ENCODE measurements at regions of chr21 and their contacts with region 1.

Region 1: GRCh38 chr21:33491373-33492102 is at the start of gene DNAJC28:
- DNase-seq: peak; percentile 92 to 97 (median 94)
- H3K4me3 ChIP-seq: peak within 1 kb of the TSS; percentile 76 to 88
- H3K4me3 Mint-ChIP-seq: peak within 1 kb of the TSS; percentile 83 to 99 (median 94)
- H3K27ac ChIP-seq: peak within 1 kb of the TSS; percentile 64
- H3K27ac Mint-ChIP-seq: peak within 1 kb of the TSS; percentile 74 to 98 (median 95)
- H3K4me1 ChIP-seq: peaks cover 4% of the 10 kb centered on the region
- H3K4me1 Mint-ChIP-seq: peaks cover 7 to 14% (median 11%) of the 10 kb centered on the region in 4 donors
- H3K27me3 ChIP-seq: no peaks in the 10 kb centered on the region
- H3K27me3 Mint-ChIP-seq: peaks cover 0 to 4% of the 10 kb centered on the region in 2 donors
- total RNA-seq, gene DNAJC28: 1.3 to 1.6 TPM

Region 2: DNA sequence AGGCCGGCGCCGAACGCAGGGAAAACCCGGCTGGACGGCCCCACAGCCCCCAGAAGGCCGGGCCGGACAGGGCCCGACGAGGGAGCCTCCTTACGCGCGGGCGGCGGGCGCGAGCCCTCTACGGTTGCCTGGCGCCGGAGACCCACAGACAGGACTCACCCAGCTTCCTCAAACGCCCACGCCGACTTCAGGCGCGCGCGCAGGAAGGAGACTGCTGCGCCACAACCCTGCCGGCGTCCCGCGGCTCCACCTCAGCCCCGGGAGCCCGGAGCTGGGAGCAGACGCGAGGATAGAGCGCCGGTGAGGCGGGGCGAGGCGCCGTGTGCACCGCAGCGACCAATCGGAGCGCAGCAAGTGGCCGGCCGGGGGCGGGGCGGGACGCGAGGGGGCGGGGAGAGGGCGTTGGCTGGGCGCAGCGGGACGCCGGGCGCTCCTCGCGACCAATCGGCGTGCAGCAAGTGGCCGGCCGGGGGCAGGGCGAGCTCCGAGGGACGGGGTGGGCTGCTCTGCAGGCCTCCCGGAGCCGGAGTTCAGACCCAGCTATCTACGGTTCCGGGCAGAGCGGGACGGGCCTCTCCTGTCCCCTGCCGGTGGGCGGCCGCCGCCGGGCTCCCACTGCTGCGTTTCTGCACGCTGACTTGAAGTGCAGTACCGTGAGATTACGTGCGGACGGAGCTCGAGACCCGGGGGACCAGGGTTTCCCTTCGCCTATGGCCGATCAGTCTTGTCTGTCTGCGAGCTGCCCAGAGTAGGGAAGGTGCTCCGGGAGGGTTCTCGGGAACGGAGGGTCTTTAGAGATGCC is 11.7 kb before region 1 on chr21 and contains the start of gene TMEM50B:
- CTCF ChIA-PET with region 1: interaction called, 21 read pairs
- POLR2A ChIA-PET with region 1: interaction called, 142 read pairs
- intact Hi-C with region 1: loop called (anchors 1 kb)
- DNase-seq: peak; percentile 91 to 95 (median 94)
- H3K4me3 ChIP-seq: peak within 1 kb of the TSS; percentile 71 to 95
- H3K4me3 Mint-ChIP-seq: peak within 1 kb of the TSS; percentile 92 to 96 (median 94)
- H3K27ac ChIP-seq: peak within 1 kb of the TSS; percentile 91
- H3K27ac Mint-ChIP-seq: peak within 1 kb of the TSS; percentile 87 to 97 (median 95)
- H3K4me1 ChIP-seq: peaks cover 14% of the 10 kb centered on the region
- H3K4me1 Mint-ChIP-seq: peaks cover 8 to 29% (median 19%) of the 10 kb centered on the region in 4 donors
- H3K27me3 ChIP-seq: no peaks in the 10 kb centered on the region
- H3K27me3 Mint-ChIP-seq: no peaks in the 10 kb centered on the region
- total RNA-seq, gene TMEM50B: 110 to 112 TPM

Region 3: DNA sequence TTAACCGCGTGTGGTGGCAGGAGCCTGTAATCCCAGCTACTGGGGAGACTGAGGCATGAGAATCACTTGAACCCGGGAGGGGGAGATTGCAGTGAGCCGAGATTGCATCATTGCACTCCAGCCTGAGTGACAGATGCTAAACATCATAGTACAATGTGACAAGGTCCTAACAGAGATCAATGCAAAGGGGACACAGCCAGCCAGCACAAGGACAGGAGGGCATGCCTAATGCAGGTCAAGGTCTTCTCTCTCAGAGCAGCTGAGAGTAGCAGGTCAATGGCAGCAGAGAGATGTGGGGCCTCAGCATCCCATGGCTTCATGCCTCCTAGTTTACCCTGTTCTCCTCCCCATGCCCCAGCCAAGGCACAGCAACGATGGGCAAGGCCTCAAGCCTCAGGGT is 880.8 kb after region 1 on chr21:
- CTCF ChIA-PET with region 1: no interaction called
- POLR2A ChIA-PET with region 1: no interaction called
- intact Hi-C with region 1: no loop called
- DNase-seq: no peak
- H3K4me3 ChIP-seq: no peak overlapping the region
- H3K4me3 Mint-ChIP-seq: no peak overlapping the region
- H3K27ac ChIP-seq: no peak overlapping the region
- H3K27ac Mint-ChIP-seq: no peak overlapping the region
- H3K4me1 ChIP-seq: no peaks in the 10 kb centered on the region
- H3K4me1 Mint-ChIP-seq: no peaks in the 10 kb centered on the region
- H3K27me3 ChIP-seq: no peaks in the 10 kb centered on the region
- H3K27me3 Mint-ChIP-seq: peaks cover 6 to 11% of the 10 kb centered on the region in 2 donors

Measured in CD4-positive, alpha-beta memory T cell (primary cell).